ENCODE measurements at regions of chr10 and their contacts with region 1.

Region 1: DNA sequence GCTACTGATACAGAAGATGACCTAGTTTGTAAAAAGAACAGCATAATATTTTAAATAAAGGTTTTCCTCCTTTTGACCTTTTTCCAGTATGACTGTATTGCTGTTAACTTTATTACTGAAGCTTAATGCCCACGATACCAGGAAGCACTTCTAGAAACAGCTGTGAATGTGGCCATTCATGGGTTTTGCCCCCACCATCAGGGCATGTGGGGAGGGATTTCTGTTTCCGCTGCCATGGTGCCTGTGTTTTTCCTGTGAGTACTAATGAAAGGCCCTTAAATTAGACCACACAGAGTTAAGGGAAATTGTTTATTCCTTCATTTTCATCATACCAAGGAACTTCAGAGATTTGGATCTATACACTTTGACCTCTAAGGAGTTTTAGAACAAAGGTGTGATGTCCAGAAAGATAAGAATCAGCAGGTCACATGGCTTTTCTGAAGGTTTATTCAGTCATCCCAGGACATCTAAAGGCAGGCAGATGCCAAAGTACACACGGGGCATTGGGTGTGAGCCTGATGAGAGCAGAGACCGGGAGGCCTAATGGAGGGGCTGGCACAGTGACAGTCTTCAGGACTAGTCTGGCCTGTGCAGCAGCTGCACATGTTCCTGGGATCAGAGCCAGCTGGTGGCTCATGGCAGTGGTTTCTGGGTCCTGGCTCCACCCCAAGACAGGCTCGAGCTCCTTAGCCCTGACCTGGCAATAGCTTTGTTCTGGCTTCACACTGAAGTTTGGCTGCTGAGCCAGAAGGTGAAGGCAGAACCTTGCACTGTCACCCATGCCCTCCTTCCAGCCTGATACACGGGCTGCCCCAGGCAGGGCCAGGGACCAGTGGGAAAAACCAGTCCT is 190.9 kb downstream of the REEP3 start:
- DNase-seq: peak; percentile 97 to 98
- H3K4me3 ChIP-seq: no peak overlapping the region
- H3K27ac ChIP-seq: peak overlapping the region; percentile 73
- H3K4me1 ChIP-seq: peaks cover 57% of the 10 kb centered on the region
- H3K27me3 ChIP-seq: no peaks in the 10 kb centered on the region
- CTCF ChIP-seq: no peak
- POLR2A ChIP-seq: no peak

Region 2: DNA sequence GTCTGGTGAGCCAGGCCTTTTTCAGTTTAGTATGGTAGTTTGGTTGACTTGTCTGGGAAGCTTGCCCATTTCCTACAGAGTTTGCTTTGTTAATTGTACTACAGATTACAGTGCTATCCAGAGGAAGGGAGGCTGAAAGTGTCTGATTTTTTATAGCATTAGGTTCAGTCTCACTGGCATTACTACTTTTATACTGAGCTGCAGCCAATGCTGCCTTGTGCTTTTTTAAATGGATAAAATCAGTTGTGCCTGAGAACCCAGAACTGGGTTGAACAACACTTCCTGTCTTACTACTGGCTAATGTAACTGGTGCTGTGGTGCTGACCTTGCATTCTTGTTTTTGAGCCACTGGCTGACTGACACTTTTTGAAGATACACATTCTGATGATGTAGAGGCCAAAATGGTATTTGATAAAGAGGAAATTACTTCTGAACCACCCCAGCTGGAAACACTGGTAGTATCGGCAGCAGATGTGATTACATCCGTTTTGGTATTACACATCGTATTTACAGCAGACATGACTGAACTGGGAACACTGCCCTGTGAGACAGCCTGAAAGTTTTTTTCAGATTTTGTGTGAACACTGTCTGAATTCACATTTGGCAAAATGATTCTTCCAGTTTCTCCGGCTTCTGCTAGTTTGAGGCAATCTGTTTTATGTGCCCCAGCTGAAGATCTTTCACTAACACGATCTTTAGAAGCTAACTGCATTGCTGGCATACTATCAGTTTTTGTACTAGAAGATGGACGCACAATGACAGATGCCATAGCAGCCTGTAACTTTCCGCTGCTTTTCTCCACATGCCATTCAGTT is 504.9 kb before region 1 on chr10:
- intact Hi-C with region 1: loop called (anchors 10 kb)
- DNase-seq: no peak
- H3K4me3 ChIP-seq: peak overlapping the region; percentile 5 to 12
- H3K27ac ChIP-seq: peak overlapping the region; percentile 59
- H3K4me1 ChIP-seq: peaks cover 63% of the 10 kb centered on the region
- H3K27me3 ChIP-seq: no peaks in the 10 kb centered on the region
- CTCF ChIP-seq: no peak
- POLR2A ChIP-seq: no peak

Region 3: DNA sequence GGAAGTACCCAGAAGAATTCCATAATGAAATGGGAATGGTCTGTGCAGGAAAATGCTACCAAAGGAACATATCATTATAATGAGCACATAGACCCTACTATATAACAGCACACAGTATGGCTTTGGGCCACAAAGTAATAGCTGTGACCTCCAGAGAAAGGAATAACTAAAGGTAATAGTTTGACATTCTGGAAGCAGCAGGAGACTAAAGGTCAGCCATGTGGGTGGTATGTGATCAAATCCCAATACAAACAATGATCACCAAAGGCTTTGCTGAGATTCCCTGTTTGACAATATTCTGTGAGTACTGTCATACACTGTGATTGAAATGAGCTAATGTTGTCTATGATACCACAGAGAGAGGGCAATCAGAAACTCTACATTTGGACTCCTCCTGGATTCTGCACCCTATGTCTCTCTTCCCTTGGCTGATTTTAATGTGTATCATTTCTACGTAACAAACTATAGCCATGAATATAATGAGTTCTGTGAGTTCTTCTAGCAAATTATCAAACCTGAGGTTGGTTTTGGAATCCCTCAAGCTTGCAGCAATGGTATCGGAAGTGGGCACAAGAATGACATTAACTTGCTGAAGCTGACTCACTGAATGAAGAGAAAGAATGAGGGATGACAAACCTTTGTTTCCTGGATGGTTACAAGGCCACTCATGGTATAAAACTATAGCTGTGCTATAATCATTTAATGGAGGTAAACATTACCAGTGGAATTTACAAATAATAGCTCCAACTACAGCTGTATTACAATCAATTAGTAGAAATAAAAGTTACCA is 345.9 kb before region 1 on chr10:
- intact Hi-C with region 1: no loop called
- DNase-seq: no peak
- H3K4me3 ChIP-seq: no peak overlapping the region
- H3K27ac ChIP-seq: no peak overlapping the region
- H3K4me1 ChIP-seq: no peaks in the 10 kb centered on the region
- H3K27me3 ChIP-seq: no peaks in the 10 kb centered on the region
- CTCF ChIP-seq: no peak
- POLR2A ChIP-seq: no peak

Region 4: GRCh38 chr10:63521416-63522276 is 190.4 kb before region 1 on chr10:
- intact Hi-C with region 1: loop called (anchors 5 kb)
- DNase-seq: no peak
- H3K4me3 ChIP-seq: peak overlapping the region; percentile 73 to 96
- H3K27ac ChIP-seq: peak overlapping the region; percentile 98
- H3K4me1 ChIP-seq: peaks cover 58% of the 10 kb centered on the region
- H3K27me3 ChIP-seq: no peaks in the 10 kb centered on the region
- CTCF ChIP-seq: no peak
- POLR2A ChIP-seq: peak in 1 of 2 donors; percentile 45

Region 5: DNA sequence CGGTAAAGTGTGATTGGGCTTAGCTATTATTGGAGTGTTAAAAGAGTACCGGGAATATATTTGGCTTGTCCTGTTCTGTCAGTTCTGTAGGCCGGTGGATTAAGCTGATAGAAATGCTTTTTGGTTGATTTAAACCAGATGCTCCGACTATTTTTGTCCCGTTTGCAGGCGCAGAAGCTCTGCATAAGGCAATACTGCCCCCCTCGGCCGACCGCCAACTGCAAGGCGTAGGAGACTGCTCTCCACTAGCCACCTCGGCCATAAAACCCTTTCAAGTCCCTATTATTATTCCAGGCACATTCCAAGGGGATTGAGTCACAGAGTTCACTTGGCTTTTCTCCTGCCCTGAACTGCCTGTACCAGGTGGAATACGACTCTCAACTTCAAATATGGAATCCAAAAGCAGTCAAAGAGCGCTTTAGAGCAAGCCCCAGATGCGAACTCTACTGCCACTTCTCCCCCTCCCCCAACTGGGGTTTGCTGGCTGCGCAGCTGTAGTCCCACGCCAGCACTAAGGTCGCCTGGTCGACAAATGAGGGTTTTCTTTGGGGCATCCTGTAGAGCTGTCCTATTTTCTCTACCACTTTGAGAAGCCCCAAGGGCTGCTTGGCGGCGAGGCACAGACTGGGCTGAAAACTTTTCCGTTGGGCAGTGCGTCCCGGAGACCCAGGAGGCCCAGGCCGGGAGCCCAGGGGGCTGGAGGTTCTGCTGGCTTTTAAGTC is 82.6 kb before region 1 on chr10:
- intact Hi-C with region 1: loop called (anchors 2 kb)
- DNase-seq: peak in 1 of 2 donors; percentile 98
- H3K4me3 ChIP-seq: peak overlapping the region; percentile 53 to 62
- H3K27ac ChIP-seq: peak overlapping the region; percentile 92
- H3K4me1 ChIP-seq: peaks cover 33% of the 10 kb centered on the region
- H3K27me3 ChIP-seq: no peaks in the 10 kb centered on the region
- CTCF ChIP-seq: peak; percentile 21 to 56 (median 44)
- POLR2A ChIP-seq: no peak

Region 6: GRCh38 chr10:65313406-65313805 is 1601.3 kb after region 1 on chr10:
- intact Hi-C with region 1: no loop called
- DNase-seq: no peak
- H3K4me3 ChIP-seq: no peak overlapping the region
- H3K27ac ChIP-seq: no peak overlapping the region
- H3K4me1 ChIP-seq: no peaks in the 10 kb centered on the region
- H3K27me3 ChIP-seq: no peaks in the 10 kb centered on the region
- CTCF ChIP-seq: no peak
- POLR2A ChIP-seq: no peak

Measured in vagina (tissue), 2 donors.